ENCODE measurements at regions of chr15 and their contacts with region 1.

Region 1: GRCh38 chr15:40893733-40894688 is at the start of gene VPS18:
- DNase-seq: peak; percentile 97 to 100 (median 99)
- ATAC-seq: peak; percentile 96
- H3K4me3 ChIP-seq: peak within 1 kb of the TSS; percentile 79
- H3K4me3 Mint-ChIP-seq: peak within 1 kb of the TSS; percentile 100
- H3K27ac ChIP-seq: peak within 1 kb of the TSS; percentile 57 to 81
- H3K27ac Mint-ChIP-seq: peak within 1 kb of the TSS; percentile 93
- H3K4me1 ChIP-seq: peaks cover 39% of the 10 kb centered on the region
- H3K4me1 Mint-ChIP-seq: peaks cover 39% of the 10 kb centered on the region
- H3K27me3 ChIP-seq: no peaks in the 10 kb centered on the region
- H3K27me3 Mint-ChIP-seq: no peaks in the 10 kb centered on the region
- CTCF ChIP-seq: peak; percentile 95
- total RNA-seq, gene VPS18: 20.8 to 21.7 TPM

Region 2: GRCh38 chr15:40593588-40594428 is 300.2 kb before region 1 on chr15 and contains the start of gene KNL1:
- CTCF ChIA-PET with region 1: no interaction called
- POLR2A ChIA-PET with region 1: no interaction called
- intact Hi-C with region 1: loop called in 1 of 2 experiments (anchors 5 kb)
- DNase-seq: peak; percentile 74 to 95 (median 83)
- ATAC-seq: peak; percentile 80
- H3K4me3 ChIP-seq: peak within 1 kb of the TSS; percentile 78
- H3K4me3 Mint-ChIP-seq: peak within 1 kb of the TSS; percentile 99
- H3K27ac ChIP-seq: peak within 1 kb of the TSS; percentile 89 to 91
- H3K27ac Mint-ChIP-seq: peak within 1 kb of the TSS; percentile 91
- H3K4me1 ChIP-seq: peaks cover 20% of the 10 kb centered on the region
- H3K4me1 Mint-ChIP-seq: peaks cover 33% of the 10 kb centered on the region
- H3K27me3 ChIP-seq: peaks cover 0 to 5% of the 10 kb centered on the region in 2 experiments
- H3K27me3 Mint-ChIP-seq: peaks cover 18% of the 10 kb centered on the region
- CTCF ChIP-seq: no peak
- total RNA-seq, gene KNL1: 0.59 to 0.69 TPM

Region 3: GRCh38 chr15:40754883-40755811 is 138.9 kb before region 1 on chr15 and contains the start of gene RMDN3:
- CTCF ChIA-PET with region 1: no interaction called
- POLR2A ChIA-PET with region 1: no interaction called
- intact Hi-C with region 1: loop called in 1 of 2 experiments (anchors 5 kb)
- DNase-seq: peak; percentile 86 to 97 (median 92)
- ATAC-seq: peak; percentile 95
- H3K4me3 ChIP-seq: peak within 1 kb of the TSS; percentile 95
- H3K4me3 Mint-ChIP-seq: peak within 1 kb of the TSS; percentile 98
- H3K27ac ChIP-seq: peak within 1 kb of the TSS; percentile 65 to 78
- H3K27ac Mint-ChIP-seq: peak within 1 kb of the TSS; percentile 98
- H3K4me1 ChIP-seq: peaks cover 30% of the 10 kb centered on the region
- H3K4me1 Mint-ChIP-seq: peaks cover 30% of the 10 kb centered on the region
- H3K27me3 ChIP-seq: no peaks in the 10 kb centered on the region
- H3K27me3 Mint-ChIP-seq: no peaks in the 10 kb centered on the region
- CTCF ChIP-seq: no peak
- total RNA-seq, gene RMDN3: 29.1 to 30.3 TPM

Region 4: DNA sequence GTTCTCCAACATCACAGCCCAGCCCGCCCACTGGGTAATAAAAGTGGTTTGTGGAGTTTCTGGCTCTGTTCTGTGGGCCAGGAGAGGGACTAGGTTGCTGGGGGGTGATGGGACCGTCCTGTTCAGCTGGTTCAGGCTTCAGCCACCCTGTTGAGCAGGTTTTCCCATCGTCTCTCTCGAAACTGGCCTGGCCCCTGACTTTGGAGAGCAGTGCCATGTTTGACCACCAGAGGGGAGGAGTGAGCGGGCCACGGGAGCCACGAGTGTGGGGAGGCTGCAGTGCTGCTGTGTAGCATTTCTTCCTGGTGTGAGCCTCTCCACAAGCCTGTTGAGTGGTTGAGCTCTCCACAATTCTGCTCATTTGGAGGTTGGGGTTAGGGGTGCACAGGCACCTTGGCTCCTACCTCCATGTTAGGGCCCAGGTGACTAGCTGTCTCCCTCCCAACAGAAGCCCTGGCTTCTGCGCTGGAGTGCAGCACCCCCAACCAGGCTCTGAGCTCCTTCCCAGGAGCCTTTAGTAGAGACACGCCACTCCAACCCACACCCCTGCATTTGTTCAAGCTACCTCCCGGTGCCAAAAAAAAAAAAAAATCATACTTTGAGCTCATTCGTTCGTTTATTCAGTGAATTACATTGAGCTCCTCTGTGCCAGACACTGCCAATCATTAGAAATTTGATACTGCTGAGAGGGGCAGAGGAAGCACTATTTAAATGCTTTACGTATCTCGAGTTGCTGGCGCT is 36.2 kb before region 1 on chr15:
- CTCF ChIA-PET with region 1: interaction called, 135 read pairs
- POLR2A ChIA-PET with region 1: interaction called, 55 read pairs
- intact Hi-C with region 1: loop called (anchors 1 kb)
- DNase-seq: peak; percentile 63 to 87 (median 77)
- ATAC-seq: peak; percentile 96
- H3K4me3 ChIP-seq: no peak overlapping the region
- H3K4me3 Mint-ChIP-seq: no peak overlapping the region
- H3K27ac ChIP-seq: no peak overlapping the region
- H3K27ac Mint-ChIP-seq: no peak overlapping the region
- H3K4me1 ChIP-seq: peaks cover 18% of the 10 kb centered on the region
- H3K4me1 Mint-ChIP-seq: peaks cover 14% of the 10 kb centered on the region
- H3K27me3 ChIP-seq: no peaks in the 10 kb centered on the region
- H3K27me3 Mint-ChIP-seq: no peaks in the 10 kb centered on the region
- CTCF ChIP-seq: peak; percentile 85

Region 5: DNA sequence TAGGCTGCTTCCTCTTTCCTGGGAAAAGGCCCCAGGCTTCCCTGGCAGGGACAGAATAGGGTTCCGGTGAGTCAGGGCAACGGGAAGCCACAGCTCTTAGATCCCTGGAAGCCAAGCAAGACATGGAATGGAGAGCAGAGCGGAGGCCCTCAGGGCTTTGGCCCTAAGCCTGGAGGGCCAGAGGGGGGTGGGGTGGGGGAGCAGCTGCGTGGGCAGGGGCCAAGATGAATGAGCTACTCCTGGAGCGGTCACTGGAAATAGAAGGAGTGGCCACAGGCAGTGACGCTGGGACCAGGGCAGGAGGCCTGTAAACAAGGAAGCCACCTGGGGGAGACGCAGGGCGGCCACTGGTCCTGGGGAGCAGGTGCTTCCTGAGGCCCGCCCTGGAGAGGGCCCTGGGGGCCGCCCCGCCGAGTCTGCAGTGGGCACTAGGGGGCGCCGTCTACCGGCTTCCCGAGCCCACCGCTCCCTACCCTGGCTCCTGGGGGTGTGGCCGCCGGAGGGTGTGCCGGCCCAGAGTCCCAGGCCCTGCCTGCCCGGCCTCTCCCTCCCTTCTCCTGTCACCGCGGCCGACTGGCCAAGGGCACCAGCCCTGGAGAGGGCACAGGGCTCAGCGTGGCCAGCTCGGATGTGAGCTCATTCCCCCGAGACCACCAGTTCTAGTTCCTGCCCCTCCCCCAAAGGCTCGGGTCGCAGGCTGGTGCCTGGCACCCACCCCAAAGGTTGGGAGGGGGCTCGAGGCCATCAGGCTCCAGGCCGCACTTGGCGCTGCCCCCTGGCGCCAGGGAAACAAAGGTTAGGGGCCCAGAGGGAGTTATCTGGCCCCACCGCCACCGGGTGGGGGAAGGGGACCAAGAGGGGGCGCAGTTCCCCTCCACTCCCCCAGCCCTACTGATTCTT is 12.3 kb after region 1 on chr15:
- CTCF ChIA-PET with region 1: interaction called, 62 read pairs
- POLR2A ChIA-PET with region 1: interaction called, 12 read pairs
- intact Hi-C with region 1: no loop called
- DNase-seq: peak; percentile 54 to 84 (median 66)
- ATAC-seq: peak; percentile 58
- H3K4me3 ChIP-seq: peak overlapping the region; percentile 70
- H3K4me3 Mint-ChIP-seq: peak overlapping the region; percentile 89
- H3K27ac ChIP-seq: peak overlapping the region; percentile 67 to 78
- H3K27ac Mint-ChIP-seq: peak overlapping the region; percentile 71
- H3K4me1 ChIP-seq: peaks cover 51% of the 10 kb centered on the region
- H3K4me1 Mint-ChIP-seq: peaks cover 37% of the 10 kb centered on the region
- H3K27me3 ChIP-seq: no peaks in the 10 kb centered on the region
- H3K27me3 Mint-ChIP-seq: no peaks in the 10 kb centered on the region
- CTCF ChIP-seq: peak; percentile 89